Prostate gland (tissue), 2 donors: ENCODE measurements at regions of chr5 and their contacts with region 1.

Region 1: DNA sequence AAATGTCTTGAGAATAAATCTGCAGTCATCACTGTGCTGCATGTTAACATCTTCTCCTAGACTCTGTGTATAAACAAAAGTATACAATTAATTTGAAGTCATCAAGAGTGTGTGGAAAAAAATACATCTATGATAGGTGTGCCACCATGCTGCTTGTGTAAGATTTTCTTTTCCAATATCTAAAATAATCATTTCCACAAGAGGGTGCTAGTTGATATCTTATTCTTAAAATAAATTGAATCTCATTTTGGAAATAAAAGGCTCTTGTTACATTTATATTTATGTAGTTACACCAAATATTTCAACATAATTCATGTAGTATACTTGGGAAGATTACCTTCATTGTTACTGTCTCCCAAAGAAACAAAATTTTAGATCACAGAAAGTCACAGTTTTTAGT is 14.1 kb upstream of the MOCS2 start:
- DNase-seq: no peak
- H3K4me3 ChIP-seq: no peak overlapping the region
- H3K27ac ChIP-seq: no peak overlapping the region
- H3K4me1 ChIP-seq: no peaks in the 10 kb centered on the region
- H3K27me3 ChIP-seq: no peaks in the 10 kb centered on the region
- CTCF ChIP-seq: peak in 1 of 4 experiments; percentile 23
- POLR2A ChIP-seq: no peak

Region 2: GRCh38 chr5:53515988-53516387 is 392.3 kb after region 1 on chr5:
- intact Hi-C with region 1: no loop called
- DNase-seq: no peak
- H3K4me3 ChIP-seq: no peak overlapping the region
- H3K27ac ChIP-seq: no peak overlapping the region
- H3K4me1 ChIP-seq: no peaks in the 10 kb centered on the region
- H3K27me3 ChIP-seq: no peaks in the 10 kb centered on the region
- CTCF ChIP-seq: no peak
- POLR2A ChIP-seq: no peak

Region 3: DNA sequence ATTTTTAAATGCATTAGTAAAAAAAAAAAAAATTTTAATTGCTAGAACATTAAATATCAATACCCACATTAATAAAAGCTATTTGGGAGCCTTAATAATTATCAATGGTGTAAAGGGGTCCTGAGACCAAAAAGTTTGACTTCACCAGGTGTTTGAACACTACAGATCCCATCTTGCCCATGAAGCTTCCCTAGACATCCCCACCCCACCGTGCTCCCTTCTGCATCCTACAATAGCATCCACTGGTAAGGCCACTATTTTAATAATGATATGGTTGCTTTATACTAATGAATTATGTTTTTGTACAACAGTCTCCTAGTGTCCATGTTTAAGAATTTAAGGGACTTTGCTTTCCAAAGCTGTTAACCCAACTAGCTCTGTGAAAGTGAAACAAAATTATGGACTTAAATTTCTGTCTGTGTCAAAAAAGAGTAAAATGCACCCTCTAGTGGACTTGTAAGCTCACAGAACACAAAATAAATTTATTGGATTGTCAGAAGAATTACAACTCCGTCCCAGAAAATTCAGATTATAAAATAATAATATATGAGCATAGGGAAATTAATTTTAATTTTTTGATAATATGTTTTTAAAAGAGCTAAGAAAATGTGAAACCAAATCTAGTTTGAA is 1110.7 kb after region 1 on chr5:
- intact Hi-C with region 1: loop called (anchors 10 kb)
- DNase-seq: no peak
- H3K4me3 ChIP-seq: no peak overlapping the region
- H3K27ac ChIP-seq: no peak overlapping the region
- H3K4me1 ChIP-seq: no peaks in the 10 kb centered on the region
- H3K27me3 ChIP-seq: no peaks in the 10 kb centered on the region
- CTCF ChIP-seq: peak in 3 of 4 experiments; percentile 30 to 51 (median 51)
- POLR2A ChIP-seq: no peak